B cell (primary cell): ENCODE measurements at regions of chr15 and their contacts with region 1.

Region 1: GRCh38 chr15:31472636-31473384 is 146.2 kb downstream of the KLF13 start:
- DNase-seq: peak; percentile 79
- ATAC-seq: peak; percentile 88
- H3K4me3 ChIP-seq: peak overlapping the region in 4 of 5 experiments; percentile 37 to 61 (median 55)
- H3K4me3 Mint-ChIP-seq: peak overlapping the region; percentile 85
- H3K27ac ChIP-seq: peak overlapping the region; percentile 86 to 88
- H3K27ac Mint-ChIP-seq: peak overlapping the region; percentile 92
- H3K4me1 ChIP-seq: peaks cover 30 to 41% of the 10 kb centered on the region in 2 donors
- H3K4me1 Mint-ChIP-seq: peaks cover 51% of the 10 kb centered on the region
- H3K27me3 ChIP-seq: no peaks in the 10 kb centered on the region
- H3K27me3 Mint-ChIP-seq: no peaks in the 10 kb centered on the region
- CTCF ChIP-seq: no peak

Region 2: DNA sequence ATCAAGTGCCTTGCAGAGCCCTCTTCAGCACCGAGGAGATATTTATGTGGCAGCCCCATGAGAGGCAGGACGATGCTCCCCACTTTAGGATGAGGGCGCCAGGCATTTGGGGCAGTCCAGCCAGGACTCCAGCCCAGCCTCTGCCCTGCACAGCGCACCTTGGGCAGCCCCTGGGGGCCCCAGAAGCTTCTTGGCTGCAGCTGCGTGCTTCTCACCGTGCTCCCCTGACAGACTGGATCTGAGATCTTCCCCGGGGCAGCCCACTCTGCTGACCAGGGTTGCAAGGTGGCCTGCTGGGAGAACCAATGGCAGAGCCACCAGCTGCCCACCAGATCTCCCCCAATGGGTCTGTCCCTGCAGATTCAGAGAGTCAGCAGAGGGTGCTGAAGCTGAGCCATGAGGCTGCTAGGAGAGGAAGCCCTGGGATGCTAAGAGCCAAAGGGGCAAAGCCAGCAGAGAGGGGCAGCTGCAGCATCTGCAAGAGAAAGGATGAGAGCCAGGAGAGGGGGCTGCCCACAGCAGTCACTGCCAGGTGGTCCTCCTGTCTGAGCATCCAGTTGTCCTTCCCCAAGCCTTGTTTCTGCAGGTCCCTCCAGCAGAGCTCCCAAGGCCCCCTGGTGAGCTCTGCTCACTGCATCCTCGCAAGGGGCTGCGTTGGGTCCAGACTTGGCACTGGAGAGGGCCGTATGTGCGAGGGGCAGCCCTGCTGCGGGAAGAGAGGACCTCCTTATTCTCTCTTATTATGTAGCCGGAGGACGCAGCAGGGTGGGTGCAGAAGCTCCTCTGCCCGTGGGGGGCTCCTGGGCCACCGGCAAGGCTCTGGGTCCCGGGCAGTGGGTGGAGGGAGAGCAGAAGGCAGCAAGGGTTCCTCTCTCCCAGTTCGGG is 160.8 kb before region 1 on chr15:
- CTCF ChIA-PET with region 1: no interaction called
- POLR2A ChIA-PET with region 1: no interaction called
- intact Hi-C with region 1: no loop called
- DNase-seq: no peak
- ATAC-seq: no peak
- H3K4me3 ChIP-seq: no peak overlapping the region
- H3K4me3 Mint-ChIP-seq: no peak overlapping the region
- H3K27ac ChIP-seq: no peak overlapping the region
- H3K27ac Mint-ChIP-seq: no peak overlapping the region
- H3K4me1 ChIP-seq: peaks cover 8 to 23% of the 10 kb centered on the region in 2 donors
- H3K4me1 Mint-ChIP-seq: peaks cover 18% of the 10 kb centered on the region
- H3K27me3 ChIP-seq: peaks cover 0 to 4% (median 0%) of the 10 kb centered on the region in 4 experiments
- H3K27me3 Mint-ChIP-seq: no peaks in the 10 kb centered on the region
- CTCF ChIP-seq: no peak

Region 3: GRCh38 chr15:31391687-31392671 is 80.8 kb before region 1 on chr15:
- CTCF ChIA-PET with region 1: interaction called, 3 read pairs
- POLR2A ChIA-PET with region 1: interaction called, 3 read pairs
- intact Hi-C with region 1: loop called (anchors 2 kb)
- DNase-seq: peak; percentile 86
- ATAC-seq: peak; percentile 92
- H3K4me3 ChIP-seq: peak overlapping the region; percentile 22 to 90 (median 82)
- H3K4me3 Mint-ChIP-seq: peak overlapping the region; percentile 94
- H3K27ac ChIP-seq: peak overlapping the region; percentile 48 to 52
- H3K27ac Mint-ChIP-seq: peak overlapping the region; percentile 89
- H3K4me1 ChIP-seq: peaks cover 3 to 13% of the 10 kb centered on the region in 2 donors
- H3K4me1 Mint-ChIP-seq: peaks cover 17% of the 10 kb centered on the region
- H3K27me3 ChIP-seq: no peaks in the 10 kb centered on the region
- H3K27me3 Mint-ChIP-seq: no peaks in the 10 kb centered on the region
- CTCF ChIP-seq: no peak

Region 4: DNA sequence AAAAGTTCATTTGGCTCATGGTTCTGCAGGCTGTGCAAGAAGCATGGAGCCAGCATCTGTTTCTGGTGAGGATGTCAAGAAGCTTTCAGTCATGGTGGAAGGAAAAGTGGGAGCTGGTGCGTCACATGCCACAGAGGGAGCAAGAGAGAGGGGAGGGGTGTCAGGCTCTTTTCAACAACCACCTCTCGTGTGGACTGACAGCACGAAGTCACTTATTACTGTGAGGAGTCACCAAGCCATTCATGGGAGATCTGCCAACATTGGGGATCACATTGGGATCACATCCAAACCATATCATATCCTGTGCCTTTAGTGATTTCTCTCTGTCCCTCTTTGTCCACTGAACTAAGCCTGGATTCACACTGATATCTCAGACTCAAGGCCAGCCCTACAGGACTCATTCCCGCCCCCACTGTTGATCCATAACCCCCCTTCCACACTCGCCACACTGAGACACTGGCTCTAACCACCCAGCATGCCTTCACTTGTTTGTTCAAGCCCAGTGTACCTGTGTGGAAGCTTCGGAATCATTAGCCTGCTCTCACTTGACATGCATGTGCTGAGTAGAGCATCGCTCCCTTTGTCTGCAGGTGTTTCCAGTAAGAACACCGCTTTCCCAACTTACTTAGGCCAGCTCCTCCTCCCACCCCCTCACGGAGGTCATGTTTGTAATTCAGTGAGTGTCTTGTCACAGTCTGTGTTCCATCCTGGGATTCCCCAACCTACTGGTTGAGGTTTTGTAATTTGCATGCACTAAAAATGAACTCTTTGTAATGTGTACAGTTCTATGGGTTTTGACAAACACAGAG is 14.0 kb before region 1 on chr15:
- CTCF ChIA-PET with region 1: interaction called, 31 read pairs
- POLR2A ChIA-PET with region 1: interaction called, 11 read pairs
- intact Hi-C with region 1: loop called (anchors 1 kb)
- DNase-seq: peak; percentile 80
- ATAC-seq: peak; percentile 96
- H3K4me3 ChIP-seq: peak overlapping the region in 3 of 5 experiments; percentile 12 to 37 (median 34)
- H3K4me3 Mint-ChIP-seq: peak overlapping the region; percentile 85
- H3K27ac ChIP-seq: peak overlapping the region; percentile 34 to 47
- H3K27ac Mint-ChIP-seq: peak overlapping the region; percentile 87
- H3K4me1 ChIP-seq: peaks cover 40 to 48% of the 10 kb centered on the region in 2 donors
- H3K4me1 Mint-ChIP-seq: peaks cover 44% of the 10 kb centered on the region
- H3K27me3 ChIP-seq: peaks cover 0 to 3% (median 0%) of the 10 kb centered on the region in 4 experiments
- H3K27me3 Mint-ChIP-seq: peaks cover 4% of the 10 kb centered on the region
- CTCF ChIP-seq: no peak

Region 5: GRCh38 chr15:31499953-31500765 is 27.3 kb after region 1 on chr15:
- CTCF ChIA-PET with region 1: no interaction called
- POLR2A ChIA-PET with region 1: no interaction called
- intact Hi-C with region 1: no loop called
- DNase-seq: no peak
- ATAC-seq: no peak
- H3K4me3 ChIP-seq: no peak overlapping the region
- H3K4me3 Mint-ChIP-seq: no peak overlapping the region
- H3K27ac ChIP-seq: no peak overlapping the region
- H3K27ac Mint-ChIP-seq: no peak overlapping the region
- H3K4me1 ChIP-seq: no peaks in the 10 kb centered on the region
- H3K4me1 Mint-ChIP-seq: no peaks in the 10 kb centered on the region
- H3K27me3 ChIP-seq: no peaks in the 10 kb centered on the region
- H3K27me3 Mint-ChIP-seq: no peaks in the 10 kb centered on the region
- CTCF ChIP-seq: no peak